ENCODE measurements at regions of chr6 and their contacts with region 1.

Region 1: GRCh38 chr6:11404838-11405237 is 132.7 kb upstream of the TMEM170B start:
- DNase-seq: no peak
- ATAC-seq: peak; percentile 47
- H3K4me3 Mint-ChIP-seq: peak overlapping the region; percentile 39
- H3K27ac Mint-ChIP-seq: peak overlapping the region; percentile 79
- H3K4me1 Mint-ChIP-seq: peaks cover 55% of the 10 kb centered on the region
- H3K27me3 Mint-ChIP-seq: no peaks in the 10 kb centered on the region
- CTCF ChIP-seq: no peak

Region 2: GRCh38 chr6:11390016-11390415 is 14.8 kb before region 1 on chr6:
- CTCF ChIA-PET with region 1: no interaction called
- POLR2A ChIA-PET with region 1: interaction called, 12 read pairs
- intact Hi-C with region 1: no loop called
- DNase-seq: no peak
- ATAC-seq: no peak
- H3K4me3 Mint-ChIP-seq: no peak overlapping the region
- H3K27ac Mint-ChIP-seq: peak overlapping the region; percentile 27
- H3K4me1 Mint-ChIP-seq: peaks cover 42% of the 10 kb centered on the region
- H3K27me3 Mint-ChIP-seq: no peaks in the 10 kb centered on the region
- CTCF ChIP-seq: no peak

Region 3: GRCh38 chr6:11419763-11420453 is 15.1 kb after region 1 on chr6:
- CTCF ChIA-PET with region 1: no interaction called
- POLR2A ChIA-PET with region 1: interaction called, 4 read pairs
- intact Hi-C with region 1: loop called (anchors 2 kb)
- DNase-seq: no peak
- ATAC-seq: no peak
- H3K4me3 Mint-ChIP-seq: no peak overlapping the region
- H3K27ac Mint-ChIP-seq: no peak overlapping the region
- H3K4me1 Mint-ChIP-seq: peaks cover 4% of the 10 kb centered on the region
- H3K27me3 Mint-ChIP-seq: no peaks in the 10 kb centered on the region
- CTCF ChIP-seq: no peak

Region 4: DNA sequence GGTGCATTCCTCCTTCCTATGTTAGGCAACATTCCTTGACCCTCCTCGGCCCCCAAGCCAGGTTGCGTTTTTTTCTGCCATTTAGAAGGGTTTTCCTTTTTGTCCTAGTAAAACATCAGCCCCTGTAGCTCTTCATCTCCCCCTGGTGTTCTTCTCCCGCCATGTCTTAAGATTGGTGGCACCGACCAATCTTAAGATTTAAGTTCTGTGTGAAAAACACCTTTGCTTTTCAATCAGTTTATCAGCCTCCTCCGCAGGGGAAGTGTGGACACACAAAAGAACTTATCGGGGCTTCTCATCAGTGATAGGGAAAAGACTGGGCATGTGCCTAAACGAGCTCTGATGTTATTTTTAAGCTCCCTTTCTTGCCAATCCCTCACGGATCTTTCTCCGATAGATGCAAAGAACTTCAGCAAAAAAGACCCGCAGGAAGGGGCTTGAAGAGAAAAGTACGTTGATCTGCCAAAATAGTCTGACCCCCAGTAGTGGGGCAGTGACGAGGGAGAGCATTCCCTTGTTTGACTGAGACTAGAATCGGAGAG is 884.6 kb after region 1 on chr6:
- CTCF ChIA-PET with region 1: no interaction called
- POLR2A ChIA-PET with region 1: no interaction called
- intact Hi-C with region 1: no loop called
- DNase-seq: no peak
- ATAC-seq: peak; percentile 51
- H3K4me3 Mint-ChIP-seq: peak overlapping the region; percentile 86
- H3K27ac Mint-ChIP-seq: no peak overlapping the region
- H3K4me1 Mint-ChIP-seq: peaks cover 15% of the 10 kb centered on the region
- H3K27me3 Mint-ChIP-seq: peaks cover 36% of the 10 kb centered on the region
- CTCF ChIP-seq: no peak